ENCODE measurements at regions of chr1 and their contacts with region 1.

Region 1: DNA sequence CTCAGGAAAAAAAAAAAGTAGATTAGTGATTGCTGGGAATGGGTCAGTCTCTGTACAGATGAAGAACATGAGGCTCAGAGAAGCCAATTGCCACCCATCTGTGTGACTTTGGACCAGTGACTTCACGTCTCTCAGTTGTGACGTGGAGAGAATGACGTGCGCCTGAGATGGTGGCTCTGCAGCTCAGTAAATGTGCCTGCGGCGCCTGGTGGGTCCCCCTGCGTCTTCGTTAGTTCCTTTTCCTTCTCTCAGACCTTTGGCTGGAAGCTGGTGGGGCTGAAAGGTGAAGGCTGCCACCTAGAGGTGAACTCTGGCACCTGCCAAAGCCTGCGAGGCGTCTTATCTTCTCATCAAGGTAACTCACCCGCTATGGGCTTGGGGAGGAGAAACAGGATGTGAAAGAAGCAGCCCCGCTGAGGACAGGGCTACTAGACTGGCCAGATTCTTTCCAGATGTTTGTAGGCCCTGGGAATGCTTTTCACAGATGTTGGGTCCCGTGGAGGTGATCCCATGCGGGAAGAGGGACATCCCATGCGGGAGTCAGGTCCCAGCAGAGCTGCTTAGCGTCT is 8.7 kb upstream of the E2F2 start:
- DNase-seq: peak; percentile 79 to 83 (median 83)
- ATAC-seq: peak; percentile 90 to 95 (median 94)
- H3K4me3 ChIP-seq: no peak overlapping the region
- H3K27ac ChIP-seq: no peak overlapping the region
- H3K4me1 ChIP-seq: peaks cover 0 to 7% (median 2%) of the 10 kb centered on the region in 4 donors
- H3K27me3 ChIP-seq: no peaks in the 10 kb centered on the region
- CTCF ChIP-seq: peak; percentile 91 to 95 (median 92)
- POLR2A ChIP-seq: no peak

Region 2: DNA sequence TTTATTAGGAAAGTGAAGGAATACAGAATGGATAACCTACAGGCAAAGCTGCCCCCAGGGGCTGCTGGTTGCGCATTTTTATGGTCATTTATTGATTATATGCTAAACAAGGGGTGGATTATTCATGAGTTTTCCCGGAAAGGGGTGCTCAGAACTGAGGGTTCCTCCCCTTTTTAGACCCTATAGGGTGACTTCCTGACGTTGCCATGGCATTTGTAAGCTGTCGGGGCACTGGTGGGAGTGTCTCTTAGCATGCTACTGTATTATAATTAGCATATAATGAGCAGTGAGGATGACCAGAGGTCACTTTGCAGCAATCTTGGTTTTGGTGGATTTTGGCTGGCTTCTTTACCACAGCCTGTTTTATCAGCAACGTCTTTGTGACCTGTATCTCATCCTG is 49.9 kb before region 1 on chr1:
- intact Hi-C with region 1: loop called in 1 of 2 experiments (anchors 5 kb)
- DNase-seq: no peak
- ATAC-seq: no peak
- H3K4me3 ChIP-seq: no peak overlapping the region
- H3K27ac ChIP-seq: no peak overlapping the region
- H3K4me1 ChIP-seq: no peaks in the 10 kb centered on the region
- H3K27me3 ChIP-seq: no peaks in the 10 kb centered on the region
- CTCF ChIP-seq: no peak
- POLR2A ChIP-seq: no peak

Region 3: GRCh38 chr1:23634842-23635651 is 95.3 kb after region 1 on chr1:
- intact Hi-C with region 1: loop called in 1 of 2 experiments (anchors 5 kb)
- DNase-seq: peak in 1 of 3 donors; percentile 55
- ATAC-seq: peak; percentile 80 to 89 (median 84)
- H3K4me3 ChIP-seq: peak overlapping the region; percentile 21 to 46 (median 23)
- H3K27ac ChIP-seq: peak overlapping the region; percentile 33 to 52 (median 37)
- H3K4me1 ChIP-seq: peaks cover 0 to 4% (median 0%) of the 10 kb centered on the region in 4 donors
- H3K27me3 ChIP-seq: no peaks in the 10 kb centered on the region
- CTCF ChIP-seq: peak; percentile 83 to 94 (median 92)
- POLR2A ChIP-seq: no peak

Measured in right lobe of liver (tissue), 6 donors.